GM12878 (cell line): ENCODE measurements at regions of chr4 and their contacts with region 1.

Region 1: GRCh38 chr4:70801265-70801809 is 38.4 kb downstream of the GRSF1 start:
- DNase-seq: no peak
- ATAC-seq: peak; percentile 53
- H3K4me3 ChIP-seq: no peak overlapping the region
- H3K27ac ChIP-seq: no peak overlapping the region
- H3K4me1 ChIP-seq: no peaks in the 10 kb centered on the region
- H3K27me3 ChIP-seq: no peaks in the 10 kb centered on the region
- CTCF ChIP-seq: no peak
- EP300 ChIP-seq: no peak
- POLR2A ChIP-seq: no peak
- RAD21 ChIP-seq: no peak

Region 2: GRCh38 chr4:70818173-70818855 is 17.0 kb after region 1 on chr4:
- CTCF ChIA-PET with region 1: interaction called, 4 read pairs
- POLR2A ChIA-PET with region 1: no interaction called
- RAD21 ChIA-PET with region 1: interaction called, 3 read pairs
- SMC1A ChIA-PET with region 1: interaction called, 12 read pairs
- in situ Hi-C with region 1: no loop called
- intact Hi-C with region 1: no loop called
- DNase-seq: no peak
- ATAC-seq: peak; percentile 57
- H3K4me3 ChIP-seq: no peak overlapping the region
- H3K27ac ChIP-seq: no peak overlapping the region
- H3K4me1 ChIP-seq: peaks cover 16% of the 10 kb centered on the region
- H3K27me3 ChIP-seq: no peaks in the 10 kb centered on the region
- CTCF ChIP-seq: no peak
- EP300 ChIP-seq: no peak
- POLR2A ChIP-seq: no peak
- RAD21 ChIP-seq: no peak

Region 3: GRCh38 chr4:70885174-70885573 is 83.8 kb after region 1 on chr4:
- CTCF ChIA-PET with region 1: no interaction called
- POLR2A ChIA-PET with region 1: no interaction called
- RAD21 ChIA-PET with region 1: no interaction called
- SMC1A ChIA-PET with region 1: no interaction called
- in situ Hi-C with region 1: no loop called
- intact Hi-C with region 1: no loop called
- DNase-seq: no peak
- ATAC-seq: no peak
- H3K4me3 ChIP-seq: no peak overlapping the region
- H3K27ac ChIP-seq: no peak overlapping the region
- H3K4me1 ChIP-seq: no peaks in the 10 kb centered on the region
- H3K27me3 ChIP-seq: no peaks in the 10 kb centered on the region; a peak in 1 of 4 replicates
- CTCF ChIP-seq: no peak; a peak in 1 of 6 replicates
- EP300 ChIP-seq: no peak
- POLR2A ChIP-seq: no peak
- RAD21 ChIP-seq: no peak

Region 4: GRCh38 chr4:70979445-70980008 is 178.2 kb after region 1 on chr4:
- CTCF ChIA-PET with region 1: no interaction called
- POLR2A ChIA-PET with region 1: no interaction called
- RAD21 ChIA-PET with region 1: no interaction called
- SMC1A ChIA-PET with region 1: no interaction called
- in situ Hi-C with region 1: no loop called
- intact Hi-C with region 1: no loop called
- DNase-seq: no peak
- ATAC-seq: peak; percentile 83
- H3K4me3 ChIP-seq: no peak overlapping the region
- H3K27ac ChIP-seq: no peak overlapping the region
- H3K4me1 ChIP-seq: no peaks in the 10 kb centered on the region; the same call in 1 of the 2 replicates
- H3K27me3 ChIP-seq: no peaks in the 10 kb centered on the region
- CTCF ChIP-seq: no peak
- EP300 ChIP-seq: no peak
- POLR2A ChIP-seq: no peak
- RAD21 ChIP-seq: no peak